Activated B cell treated with CpG ODN at 0.5 μM for 24 hours (primary cell): ENCODE measurements at regions of chr14 and their contacts with region 1.

Region 1: DNA sequence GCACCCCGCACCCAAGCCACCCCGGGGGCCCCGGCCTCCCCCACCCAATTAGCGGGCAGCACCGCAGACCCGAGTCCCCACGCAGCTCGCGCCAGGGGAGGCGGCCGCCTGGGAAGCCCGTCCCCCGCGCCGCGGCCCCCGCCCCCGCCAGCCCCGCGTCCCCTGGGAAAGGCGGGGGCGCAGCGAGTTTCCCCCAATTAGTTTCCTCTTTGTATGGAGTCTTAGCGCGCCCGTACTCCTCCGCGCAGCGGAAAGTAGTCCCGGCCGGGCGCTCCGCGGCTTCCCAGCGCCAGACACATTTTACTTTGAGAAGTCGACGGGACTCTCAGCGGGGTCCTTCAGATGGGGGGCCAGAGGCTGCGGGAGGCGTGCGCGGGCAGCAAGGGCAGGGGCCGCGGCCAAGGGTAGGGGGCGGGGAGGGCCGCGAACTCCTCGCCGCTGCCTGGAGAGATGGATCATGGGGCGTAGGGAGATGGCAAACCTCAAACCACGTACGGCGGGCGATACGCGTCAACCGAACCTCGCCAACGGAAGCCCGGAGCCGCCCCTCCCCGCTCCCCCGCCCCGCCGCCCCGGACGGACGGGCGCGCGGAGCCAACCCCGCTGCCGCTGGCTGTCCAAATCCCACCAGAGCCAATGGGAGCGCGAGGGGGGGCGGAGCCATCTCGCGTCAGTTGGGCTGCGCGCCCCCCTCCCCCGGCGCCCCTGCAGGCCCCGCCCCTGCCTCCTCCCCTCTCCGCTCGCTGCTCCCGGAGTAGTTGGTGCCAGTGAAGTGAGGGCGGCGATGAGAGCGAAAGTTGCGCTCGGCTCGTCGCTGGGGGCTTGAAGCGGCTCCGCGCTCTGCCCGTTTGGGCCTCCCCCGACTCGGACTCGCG is at the start of gene RCOR1:
- DNase-seq: peak; percentile 94
- ATAC-seq: peak; percentile 84
- H3K4me3 Mint-ChIP-seq: peak within 1 kb of the TSS; percentile 93
- H3K27ac Mint-ChIP-seq: peak within 1 kb of the TSS; percentile 97
- H3K4me1 Mint-ChIP-seq: peaks cover 26% of the 10 kb centered on the region
- H3K27me3 Mint-ChIP-seq: no peaks in the 10 kb centered on the region
- CTCF ChIP-seq: no peak
- total RNA-seq, gene RCOR1: 21.0 and 23.0 TPM in 2 replicates

Region 2: DNA sequence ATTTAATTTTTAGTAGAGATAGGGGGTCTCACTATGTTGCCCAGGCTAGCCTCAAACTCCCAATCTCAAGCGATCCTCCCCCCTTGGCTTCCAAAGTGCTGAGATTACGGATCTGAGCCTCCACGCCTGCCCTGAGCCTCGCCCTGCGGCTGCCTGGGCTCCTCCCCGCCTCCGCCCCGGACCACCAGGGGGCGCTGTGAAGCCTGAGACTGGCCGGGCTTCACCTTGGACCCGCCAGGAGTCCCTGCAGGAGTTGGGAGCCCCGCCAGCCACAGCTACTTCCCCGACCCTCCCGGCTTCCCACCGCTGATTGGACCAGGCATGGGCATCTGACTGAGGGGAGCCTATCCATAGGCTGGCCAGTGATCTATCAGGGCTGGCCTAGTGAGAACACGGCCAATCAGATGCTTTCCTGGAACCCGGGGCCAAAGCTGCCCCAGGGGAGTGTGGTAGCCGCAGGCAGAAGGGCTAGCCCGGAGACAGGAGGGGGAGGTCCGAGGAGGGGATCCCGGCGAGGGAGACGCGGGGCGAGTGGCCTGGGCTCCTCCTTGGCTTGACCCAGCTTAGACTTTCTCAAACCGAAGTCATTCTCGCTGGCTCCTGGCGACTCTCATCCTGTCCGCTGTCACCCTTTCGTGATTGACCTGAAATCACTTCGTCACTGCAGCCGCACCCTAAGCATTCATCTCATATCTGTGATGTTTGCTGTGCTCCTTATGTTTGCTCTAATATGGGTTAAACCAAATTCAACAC is 67.5 kb before region 1 on chr14:
- CTCF ChIA-PET with region 1: interaction called, 15 read pairs
- POLR2A ChIA-PET with region 1: interaction called, 26 read pairs
- intact Hi-C with region 1: loop called (anchors 1 kb)
- DNase-seq: peak; percentile 97
- ATAC-seq: peak; percentile 96
- H3K4me3 Mint-ChIP-seq: peak overlapping the region; percentile 91
- H3K27ac Mint-ChIP-seq: peak overlapping the region; percentile 81
- H3K4me1 Mint-ChIP-seq: peaks cover 28% of the 10 kb centered on the region
- H3K27me3 Mint-ChIP-seq: no peaks in the 10 kb centered on the region
- CTCF ChIP-seq: peak; percentile 61

Region 3: GRCh38 chr14:102565331-102565887 is 26.7 kb before region 1 on chr14:
- CTCF ChIA-PET with region 1: no interaction called
- POLR2A ChIA-PET with region 1: interaction called, 16 read pairs
- intact Hi-C with region 1: loop called (anchors 1 kb)
- DNase-seq: no peak
- ATAC-seq: peak; percentile 68
- H3K4me3 Mint-ChIP-seq: peak overlapping the region; percentile 51
- H3K27ac Mint-ChIP-seq: peak overlapping the region; percentile 65
- H3K4me1 Mint-ChIP-seq: peaks cover 39% of the 10 kb centered on the region
- H3K27me3 Mint-ChIP-seq: no peaks in the 10 kb centered on the region
- CTCF ChIP-seq: no peak

Region 4: GRCh38 chr14:102629808-102630350 is 37.8 kb after region 1 on chr14:
- CTCF ChIA-PET with region 1: interaction called, 4 read pairs
- POLR2A ChIA-PET with region 1: no interaction called
- intact Hi-C with region 1: loop called (anchors 5 kb)
- DNase-seq: no peak
- ATAC-seq: no peak
- H3K4me3 Mint-ChIP-seq: no peak overlapping the region
- H3K27ac Mint-ChIP-seq: peak overlapping the region; percentile 59
- H3K4me1 Mint-ChIP-seq: peaks cover 53% of the 10 kb centered on the region
- H3K27me3 Mint-ChIP-seq: no peaks in the 10 kb centered on the region
- CTCF ChIP-seq: no peak

Region 5: DNA sequence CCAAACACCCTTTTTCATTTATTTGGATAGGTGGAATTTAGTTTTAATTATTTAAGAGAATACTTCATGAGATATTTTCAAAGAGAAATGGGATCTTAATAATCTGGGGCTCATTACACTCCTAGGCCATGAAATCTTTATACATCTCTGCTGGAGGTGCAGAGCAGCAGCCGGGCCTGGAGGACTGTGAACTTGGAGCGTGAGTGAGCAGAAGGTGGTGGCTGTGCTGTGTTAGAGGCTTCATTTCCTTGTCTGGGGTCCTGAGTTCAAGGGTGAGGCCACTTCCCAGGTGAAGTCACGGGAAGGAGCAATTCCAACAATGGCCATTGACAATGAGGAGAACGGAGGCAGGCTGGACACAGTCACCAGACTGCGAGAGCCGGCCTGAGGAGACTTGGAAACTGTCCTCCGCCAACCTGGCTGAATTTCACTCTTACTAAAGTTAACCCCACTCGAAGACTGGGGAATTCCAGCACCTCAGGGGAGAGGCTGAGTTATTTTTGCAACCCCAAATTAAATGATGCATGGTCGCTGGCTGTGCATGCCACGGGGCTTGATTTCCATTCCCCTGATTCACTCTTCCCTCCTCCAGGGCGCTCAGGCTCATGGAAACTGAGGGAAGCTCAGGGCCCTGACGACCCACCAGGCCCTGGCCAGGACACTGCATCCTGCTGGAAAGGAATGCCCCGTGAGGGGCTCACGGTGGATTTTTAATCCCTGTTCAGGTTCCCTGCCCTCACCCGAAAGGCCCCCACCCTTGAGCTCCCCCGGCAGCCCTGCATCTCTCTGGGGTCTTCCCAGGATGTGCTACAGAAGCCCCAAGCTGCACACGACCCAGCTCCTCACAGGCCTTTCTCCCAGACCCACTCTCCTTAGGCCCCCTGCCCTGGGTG is 162.5 kb after region 1 on chr14:
- CTCF ChIA-PET with region 1: no interaction called
- POLR2A ChIA-PET with region 1: interaction called, 11 read pairs
- intact Hi-C with region 1: no loop called
- DNase-seq: peak; percentile 39
- ATAC-seq: peak; percentile 80
- H3K4me3 Mint-ChIP-seq: peak overlapping the region; percentile 74
- H3K27ac Mint-ChIP-seq: peak overlapping the region; percentile 88
- H3K4me1 Mint-ChIP-seq: peaks cover 53% of the 10 kb centered on the region
- H3K27me3 Mint-ChIP-seq: no peaks in the 10 kb centered on the region
- CTCF ChIP-seq: no peak

Region 6: GRCh38 chr14:102805371-102806246 is 213.5 kb after region 1 on chr14:
- CTCF ChIA-PET with region 1: interaction called, 3 read pairs
- POLR2A ChIA-PET with region 1: no interaction called
- intact Hi-C with region 1: loop called (anchors 10 kb)
- DNase-seq: peak; percentile 30
- ATAC-seq: peak; percentile 51
- H3K4me3 Mint-ChIP-seq: peak overlapping the region; percentile 74
- H3K27ac Mint-ChIP-seq: peak overlapping the region; percentile 83
- H3K4me1 Mint-ChIP-seq: peaks cover 79% of the 10 kb centered on the region
- H3K27me3 Mint-ChIP-seq: no peaks in the 10 kb centered on the region
- CTCF ChIP-seq: no peak